CD8-positive, alpha-beta T cell (primary cell): ENCODE measurements at regions of chr3 and their contacts with region 1.

Region 1: GRCh38 chr3:50542177-50543034 is 25.1 kb downstream of the C3orf18 start:
- DNase-seq: peak; percentile 38 to 76 (median 63)
- ATAC-seq: peak; percentile 84
- H3K4me3 ChIP-seq: no peak overlapping the region
- H3K4me3 Mint-ChIP-seq: no peak overlapping the region
- H3K27ac ChIP-seq: no peak overlapping the region
- H3K27ac Mint-ChIP-seq: no peak overlapping the region
- H3K4me1 ChIP-seq: peaks cover 3% of the 10 kb centered on the region
- H3K4me1 Mint-ChIP-seq: no peaks in the 10 kb centered on the region
- H3K27me3 ChIP-seq: no peaks in the 10 kb centered on the region
- H3K27me3 Mint-ChIP-seq: peaks cover 10% of the 10 kb centered on the region
- CTCF ChIP-seq: peak; percentile 78

Region 2: DNA sequence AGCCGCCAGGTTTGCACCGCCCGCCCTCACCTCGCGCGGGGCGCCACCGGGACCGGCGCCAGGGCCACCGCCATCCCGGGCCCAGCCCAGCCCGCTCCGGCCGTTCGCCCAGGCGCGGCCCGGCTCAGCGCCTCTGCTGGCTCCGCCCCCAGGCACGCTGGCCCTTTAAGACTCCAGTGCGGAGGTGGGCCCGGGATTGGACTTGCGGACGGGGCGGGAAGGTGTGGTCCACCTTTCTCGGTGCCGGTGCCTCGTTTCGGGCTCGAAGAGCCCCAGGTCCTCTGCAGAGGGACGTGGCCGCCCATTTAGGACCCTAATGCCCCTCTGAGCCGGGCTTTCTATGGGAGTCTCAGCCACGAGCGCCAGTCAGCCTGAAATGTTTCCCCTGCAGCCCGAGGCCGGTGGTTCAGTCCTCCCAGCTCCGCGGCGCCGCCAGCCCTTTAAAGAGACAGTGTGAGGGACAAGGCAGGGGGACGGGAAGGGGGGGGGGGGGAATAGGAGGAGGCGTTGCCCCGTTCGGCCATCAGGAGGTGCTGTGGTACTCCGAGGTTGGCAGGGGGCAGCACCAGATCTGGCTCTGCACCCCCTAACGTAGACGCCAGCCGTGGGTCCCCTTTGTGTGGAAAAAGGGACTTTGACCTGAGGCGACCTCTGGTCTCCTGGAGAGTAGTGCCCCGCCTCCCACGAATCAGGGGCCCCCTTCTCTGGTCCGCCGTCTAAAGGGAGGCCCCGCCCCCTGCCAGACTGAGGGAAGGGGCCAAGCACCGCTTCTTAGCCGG is 220.9 kb before region 1 on chr3:
- CTCF ChIA-PET with region 1: interaction called, 3 read pairs
- POLR2A ChIA-PET with region 1: no interaction called
- intact Hi-C with region 1: loop called in 1 of 2 experiments (anchors 1 kb)
- DNase-seq: peak; percentile 65 to 89 (median 82)
- ATAC-seq: peak; percentile 69
- H3K4me3 ChIP-seq: peak overlapping the region; percentile 71 to 96
- H3K4me3 Mint-ChIP-seq: peak overlapping the region; percentile 85
- H3K27ac ChIP-seq: peak overlapping the region; percentile 77 to 94
- H3K27ac Mint-ChIP-seq: peak overlapping the region; percentile 92
- H3K4me1 ChIP-seq: peaks cover 30% of the 10 kb centered on the region
- H3K4me1 Mint-ChIP-seq: peaks cover 41% of the 10 kb centered on the region
- H3K27me3 ChIP-seq: no peaks in the 10 kb centered on the region
- H3K27me3 Mint-ChIP-seq: no peaks in the 10 kb centered on the region
- CTCF ChIP-seq: peak; percentile 47

Region 3: DNA sequence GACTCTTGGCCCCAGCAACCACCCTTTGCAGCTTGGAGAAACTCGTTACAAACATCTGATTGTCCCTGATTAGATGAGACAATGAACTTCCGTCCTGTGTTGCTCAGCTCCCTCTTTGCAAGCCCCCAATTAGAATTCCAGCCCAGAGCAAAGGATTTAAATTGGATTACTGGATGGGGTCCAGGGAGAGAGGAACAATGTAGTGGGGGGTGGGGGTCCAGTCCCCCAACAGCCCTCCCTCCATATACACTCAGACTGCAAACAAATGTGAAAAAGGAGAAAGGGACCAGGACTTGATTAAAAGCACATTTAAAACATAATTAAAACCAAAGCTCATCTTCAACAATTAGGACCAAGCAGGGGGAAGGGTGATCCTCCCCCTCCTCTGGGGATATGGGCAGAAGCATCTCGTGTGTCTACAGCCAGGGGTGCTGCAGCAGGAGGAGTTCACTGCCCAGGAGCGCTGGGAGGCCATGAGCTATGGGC is 111.4 kb before region 1 on chr3:
- CTCF ChIA-PET with region 1: interaction called, 125 read pairs
- POLR2A ChIA-PET with region 1: no interaction called
- intact Hi-C with region 1: loop called in 1 of 2 experiments (anchors 1 kb)
- DNase-seq: peak in 1 of 9 experiments; percentile 22
- ATAC-seq: no peak
- H3K4me3 ChIP-seq: no peak overlapping the region
- H3K4me3 Mint-ChIP-seq: peak overlapping the region; percentile 16
- H3K27ac ChIP-seq: peak overlapping the region in 1 of 2 experiments; percentile 58
- H3K27ac Mint-ChIP-seq: peak overlapping the region; percentile 11
- H3K4me1 ChIP-seq: peaks cover 26% of the 10 kb centered on the region
- H3K4me1 Mint-ChIP-seq: peaks cover 19% of the 10 kb centered on the region
- H3K27me3 ChIP-seq: no peaks in the 10 kb centered on the region
- H3K27me3 Mint-ChIP-seq: no peaks in the 10 kb centered on the region
- CTCF ChIP-seq: no peak

Region 4: DNA sequence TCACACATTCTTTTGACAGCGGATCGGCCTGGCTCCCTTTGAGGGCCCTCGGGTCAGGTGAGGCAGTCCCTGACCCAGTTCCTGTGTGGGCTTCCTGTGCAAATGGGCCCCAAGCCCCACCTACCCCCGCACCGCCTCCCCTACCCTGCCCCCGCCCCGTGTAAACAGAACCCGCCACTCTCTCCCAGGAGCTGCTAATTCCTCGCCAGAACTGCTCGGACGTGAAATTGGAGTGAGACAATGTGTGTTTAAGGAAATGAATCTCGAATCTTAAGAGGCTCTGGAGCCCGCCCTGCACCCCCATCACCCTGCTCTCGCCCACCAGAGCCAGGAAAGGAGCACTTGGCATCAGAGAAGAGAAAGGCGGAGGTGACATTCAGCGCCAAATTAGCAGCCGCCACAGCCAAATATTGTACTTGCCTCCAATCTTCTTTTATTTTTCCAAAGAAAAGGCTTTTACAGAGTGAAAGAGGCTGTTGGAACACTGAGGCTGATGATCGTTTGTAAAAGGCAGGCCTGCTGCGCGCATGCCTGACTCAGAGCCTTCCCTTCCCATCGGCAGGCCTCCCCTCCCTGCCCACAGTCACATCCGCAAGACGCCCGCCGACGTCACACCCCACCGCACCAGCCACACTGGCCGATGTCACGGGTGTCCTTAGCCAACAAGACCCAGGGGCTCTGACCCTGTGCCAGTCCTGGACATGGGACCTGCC is 92.0 kb before region 1 on chr3:
- CTCF ChIA-PET with region 1: interaction called, 21 read pairs
- POLR2A ChIA-PET with region 1: no interaction called
- intact Hi-C with region 1: no loop called
- DNase-seq: peak; percentile 48 to 82 (median 75)
- ATAC-seq: peak; percentile 80
- H3K4me3 ChIP-seq: peak overlapping the region; percentile 43 to 54
- H3K4me3 Mint-ChIP-seq: peak overlapping the region; percentile 86
- H3K27ac ChIP-seq: peak overlapping the region; percentile 83 to 88
- H3K27ac Mint-ChIP-seq: peak overlapping the region; percentile 93
- H3K4me1 ChIP-seq: peaks cover 28% of the 10 kb centered on the region
- H3K4me1 Mint-ChIP-seq: peaks cover 32% of the 10 kb centered on the region
- H3K27me3 ChIP-seq: no peaks in the 10 kb centered on the region
- H3K27me3 Mint-ChIP-seq: no peaks in the 10 kb centered on the region
- CTCF ChIP-seq: no peak

Region 5: DNA sequence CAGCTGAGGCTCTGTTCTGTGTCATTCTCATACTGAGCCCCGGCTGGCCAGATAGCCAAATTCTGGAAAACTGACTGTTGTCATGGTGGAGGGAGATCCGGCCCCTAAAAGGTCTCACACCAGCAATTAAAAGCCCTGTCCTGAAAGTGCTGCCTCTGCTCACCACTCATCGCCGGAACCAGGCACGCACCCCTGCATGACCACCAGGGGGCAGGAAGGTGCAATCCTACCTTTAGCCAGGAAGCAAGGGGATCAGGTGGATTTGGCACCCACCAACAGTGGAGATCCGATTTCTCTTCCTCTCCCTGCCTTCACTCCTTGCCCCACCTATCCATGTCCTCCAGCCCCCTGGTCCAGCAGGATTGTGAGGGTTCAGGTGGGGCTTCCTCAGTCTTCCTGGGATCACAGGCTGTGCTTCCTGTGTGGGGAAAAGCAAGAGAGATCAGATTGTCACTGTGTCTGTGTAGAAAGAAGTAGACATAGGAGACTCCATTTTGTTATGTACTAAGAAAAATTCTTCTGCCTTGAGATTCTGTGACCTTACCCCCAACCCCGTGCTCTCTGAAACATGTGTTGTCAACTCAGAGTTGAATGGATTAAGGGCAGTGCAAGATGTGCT is 22.8 kb before region 1 on chr3:
- CTCF ChIA-PET with region 1: interaction called, 14 read pairs
- POLR2A ChIA-PET with region 1: no interaction called
- intact Hi-C with region 1: no loop called
- DNase-seq: peak; percentile 32 to 81 (median 73)
- ATAC-seq: peak; percentile 91
- H3K4me3 ChIP-seq: no peak overlapping the region
- H3K4me3 Mint-ChIP-seq: no peak overlapping the region
- H3K27ac ChIP-seq: no peak overlapping the region
- H3K27ac Mint-ChIP-seq: no peak overlapping the region
- H3K4me1 ChIP-seq: no peaks in the 10 kb centered on the region
- H3K4me1 Mint-ChIP-seq: peaks cover 15% of the 10 kb centered on the region
- H3K27me3 ChIP-seq: no peaks in the 10 kb centered on the region
- H3K27me3 Mint-ChIP-seq: no peaks in the 10 kb centered on the region
- CTCF ChIP-seq: peak; percentile 86